Endothelial cell of umbilical vein (primary cell): ENCODE measurements at regions of chr2 and their contacts with region 1.

Region 1: DNA sequence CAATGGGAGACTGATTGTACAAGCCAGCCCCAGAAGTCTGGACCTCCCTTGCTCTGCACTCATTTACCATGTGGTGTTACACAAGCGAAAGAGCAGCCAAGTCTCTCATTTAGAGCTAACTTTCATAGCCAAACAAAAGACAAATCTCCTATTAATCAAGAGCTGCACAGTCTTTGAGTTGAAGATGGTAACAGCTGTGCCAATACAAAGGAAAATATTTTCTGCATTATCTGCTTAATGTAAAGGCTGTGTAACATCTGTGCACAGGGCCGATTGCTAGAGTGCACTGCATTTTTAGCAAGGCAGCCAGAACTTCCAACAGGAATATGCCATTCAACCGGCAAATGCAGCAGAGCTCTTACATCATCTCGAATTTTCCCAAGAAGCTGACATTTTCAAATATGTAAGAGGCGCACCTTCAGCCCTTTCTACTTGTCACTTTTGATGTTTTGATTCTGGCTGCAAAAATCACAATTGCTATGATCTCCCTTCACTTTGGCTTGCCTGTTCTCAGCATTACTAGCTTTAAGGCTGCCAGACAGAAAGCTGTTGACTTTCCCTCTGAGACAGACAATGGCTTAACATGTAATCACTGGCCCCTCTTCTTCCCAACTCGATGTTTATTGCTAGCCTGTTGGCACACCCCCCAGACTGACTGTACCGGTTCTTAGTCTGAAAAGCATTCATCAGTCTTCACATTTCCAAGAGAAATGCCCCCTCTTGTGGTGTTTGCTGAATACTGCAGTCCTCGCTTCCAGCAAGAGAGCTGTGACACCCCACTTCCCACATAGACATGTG is 96.9 kb upstream of the TANK start:
- DNase-seq: peak; percentile 89
- H3K4me3 ChIP-seq: no peak overlapping the region
- H3K27ac ChIP-seq: no peak overlapping the region
- H3K4me1 ChIP-seq: peaks cover 4% of the 10 kb centered on the region
- H3K27me3 ChIP-seq: no peaks in the 10 kb centered on the region
- CTCF ChIP-seq: peak; percentile 79 to 91
- POLR2A ChIP-seq: no peak

Region 2: DNA sequence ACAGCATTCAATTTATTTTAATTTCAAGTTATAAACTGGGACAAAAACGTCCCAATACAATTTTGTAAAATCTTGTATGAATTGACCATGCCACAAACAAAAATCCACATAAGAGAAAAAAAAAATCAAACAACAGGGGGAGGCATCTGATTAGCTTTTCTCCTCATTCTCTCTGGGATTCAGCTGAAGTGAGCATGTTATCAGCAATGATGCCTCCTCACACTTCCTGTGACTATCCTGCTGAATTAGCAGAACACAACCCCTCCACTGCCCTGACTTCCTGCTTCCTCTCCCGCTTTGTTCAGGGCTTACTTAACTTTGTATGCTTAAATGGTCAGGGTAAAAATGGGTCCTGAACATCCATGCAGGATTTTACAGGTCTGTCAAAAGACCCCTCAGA is 731.0 kb before region 1 on chr2:
- CTCF ChIA-PET with region 1: interaction called, 4 read pairs
- POLR2A ChIA-PET with region 1: no interaction called
- dilution Hi-C with region 1: no loop called
- intact Hi-C with region 1: loop called (anchors 5 kb)
- DNase-seq: peak; percentile 70
- H3K4me3 ChIP-seq: no peak overlapping the region
- H3K27ac ChIP-seq: no peak overlapping the region
- H3K4me1 ChIP-seq: peaks cover 35% of the 10 kb centered on the region
- H3K27me3 ChIP-seq: no peaks in the 10 kb centered on the region
- CTCF ChIP-seq: peak in 1 of 2 donors; percentile 1
- POLR2A ChIP-seq: no peak

Region 3: GRCh38 chr2:160869411-160869810 is 193.9 kb before region 1 on chr2:
- CTCF ChIA-PET with region 1: no interaction called
- POLR2A ChIA-PET with region 1: no interaction called
- dilution Hi-C with region 1: no loop called
- intact Hi-C with region 1: no loop called
- DNase-seq: no peak
- H3K4me3 ChIP-seq: no peak overlapping the region
- H3K27ac ChIP-seq: no peak overlapping the region
- H3K4me1 ChIP-seq: peaks cover 2% of the 10 kb centered on the region
- H3K27me3 ChIP-seq: peaks cover 8 to 18% of the 10 kb centered on the region in 2 experiments
- CTCF ChIP-seq: no peak
- POLR2A ChIP-seq: no peak

Region 4: GRCh38 chr2:161004379-161004778 is 59.0 kb before region 1 on chr2:
- CTCF ChIA-PET with region 1: interaction called, 48 read pairs
- POLR2A ChIA-PET with region 1: no interaction called
- dilution Hi-C with region 1: no loop called
- intact Hi-C with region 1: no loop called
- DNase-seq: peak; percentile 22
- H3K4me3 ChIP-seq: no peak overlapping the region
- H3K27ac ChIP-seq: no peak overlapping the region
- H3K4me1 ChIP-seq: no peaks in the 10 kb centered on the region
- H3K27me3 ChIP-seq: no peaks in the 10 kb centered on the region
- CTCF ChIP-seq: peak; percentile 21 to 31
- POLR2A ChIP-seq: no peak

Region 5: GRCh38 chr2:161077367-161078210 is 14.2 kb after region 1 on chr2:
- CTCF ChIA-PET with region 1: interaction called, 46 read pairs
- POLR2A ChIA-PET with region 1: interaction called, 5 read pairs
- dilution Hi-C with region 1: no loop called
- intact Hi-C with region 1: no loop called
- DNase-seq: peak; percentile 99
- H3K4me3 ChIP-seq: no peak overlapping the region
- H3K27ac ChIP-seq: peak overlapping the region; percentile 99
- H3K4me1 ChIP-seq: peaks cover 37% of the 10 kb centered on the region
- H3K27me3 ChIP-seq: no peaks in the 10 kb centered on the region
- CTCF ChIP-seq: no peak
- POLR2A ChIP-seq: no peak

Region 6: DNA sequence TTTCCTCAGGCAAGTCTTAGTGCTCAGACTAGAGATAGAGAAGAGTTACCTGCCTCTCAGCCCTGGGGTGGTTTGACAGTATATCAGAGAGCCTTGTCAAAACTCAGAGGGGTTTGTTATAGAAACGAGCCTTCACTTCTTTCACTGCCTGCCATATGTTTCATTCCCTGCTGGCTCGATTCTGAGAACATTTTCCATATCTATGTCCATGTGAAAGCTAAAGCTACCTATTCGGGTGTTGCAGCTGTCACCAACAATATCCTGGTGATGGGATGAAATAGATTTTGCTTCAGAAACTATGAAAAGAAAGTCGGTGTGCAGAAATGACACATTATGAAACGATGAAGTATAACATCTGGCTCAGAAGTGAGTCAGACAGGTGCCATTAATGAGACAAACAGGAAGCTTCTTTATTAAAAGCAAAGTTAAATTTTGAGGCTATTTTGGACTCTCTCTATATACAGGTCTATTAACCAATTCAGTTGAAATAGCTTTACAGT is 40.7 kb after region 1 on chr2:
- CTCF ChIA-PET with region 1: interaction called, 12 read pairs
- POLR2A ChIA-PET with region 1: no interaction called
- dilution Hi-C with region 1: no loop called
- intact Hi-C with region 1: no loop called
- DNase-seq: no peak
- H3K4me3 ChIP-seq: no peak overlapping the region
- H3K27ac ChIP-seq: no peak overlapping the region
- H3K4me1 ChIP-seq: peaks cover 22% of the 10 kb centered on the region
- H3K27me3 ChIP-seq: no peaks in the 10 kb centered on the region
- CTCF ChIP-seq: no peak
- POLR2A ChIP-seq: no peak

Region 7: DNA sequence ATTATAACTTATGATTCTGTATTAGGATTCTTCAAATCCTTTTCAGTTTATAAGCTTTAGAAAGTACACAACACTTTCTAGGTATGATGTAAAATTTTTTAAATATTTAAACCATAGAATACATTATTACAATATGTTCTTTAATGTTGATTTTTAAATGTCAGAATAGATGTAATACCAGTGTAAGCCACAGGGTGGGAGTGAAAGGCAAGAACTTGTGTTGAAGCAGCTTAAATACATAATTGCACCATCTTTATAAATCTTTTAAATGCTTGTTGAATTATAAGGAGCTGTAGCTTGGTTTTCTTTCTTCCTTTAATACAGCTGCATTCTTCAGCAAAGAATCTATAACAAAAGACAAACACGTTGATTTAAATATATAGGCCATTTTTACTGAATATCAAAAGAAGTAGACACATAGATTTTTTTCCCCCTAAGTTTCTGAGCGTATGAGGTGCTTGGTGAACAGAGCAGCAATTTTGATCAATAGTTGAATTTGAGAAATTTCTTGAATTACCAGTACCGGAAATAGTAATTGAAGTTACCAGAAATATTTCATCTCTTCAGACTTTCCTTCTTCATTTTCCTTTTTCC is 159.9 kb after region 1 on chr2:
- CTCF ChIA-PET with region 1: interaction called, 14 read pairs
- POLR2A ChIA-PET with region 1: no interaction called
- dilution Hi-C with region 1: no loop called
- intact Hi-C with region 1: no loop called
- DNase-seq: peak; percentile 77
- H3K4me3 ChIP-seq: no peak overlapping the region
- H3K27ac ChIP-seq: no peak overlapping the region
- H3K4me1 ChIP-seq: no peaks in the 10 kb centered on the region
- H3K27me3 ChIP-seq: no peaks in the 10 kb centered on the region
- CTCF ChIP-seq: peak; percentile 24 to 26
- POLR2A ChIP-seq: no peak

Region 8: GRCh38 chr2:161321944-161322648 is 258.7 kb after region 1 on chr2:
- CTCF ChIA-PET with region 1: no interaction called
- POLR2A ChIA-PET with region 1: no interaction called
- dilution Hi-C with region 1: no loop called
- intact Hi-C with region 1: no loop called
- DNase-seq: no peak
- H3K4me3 ChIP-seq: no peak overlapping the region
- H3K27ac ChIP-seq: no peak overlapping the region
- H3K4me1 ChIP-seq: no peaks in the 10 kb centered on the region
- H3K27me3 ChIP-seq: no peaks in the 10 kb centered on the region
- CTCF ChIP-seq: no peak
- POLR2A ChIP-seq: no peak